ENCODE measurements at regions of chr16 and their contacts with region 1.

Region 1: DNA sequence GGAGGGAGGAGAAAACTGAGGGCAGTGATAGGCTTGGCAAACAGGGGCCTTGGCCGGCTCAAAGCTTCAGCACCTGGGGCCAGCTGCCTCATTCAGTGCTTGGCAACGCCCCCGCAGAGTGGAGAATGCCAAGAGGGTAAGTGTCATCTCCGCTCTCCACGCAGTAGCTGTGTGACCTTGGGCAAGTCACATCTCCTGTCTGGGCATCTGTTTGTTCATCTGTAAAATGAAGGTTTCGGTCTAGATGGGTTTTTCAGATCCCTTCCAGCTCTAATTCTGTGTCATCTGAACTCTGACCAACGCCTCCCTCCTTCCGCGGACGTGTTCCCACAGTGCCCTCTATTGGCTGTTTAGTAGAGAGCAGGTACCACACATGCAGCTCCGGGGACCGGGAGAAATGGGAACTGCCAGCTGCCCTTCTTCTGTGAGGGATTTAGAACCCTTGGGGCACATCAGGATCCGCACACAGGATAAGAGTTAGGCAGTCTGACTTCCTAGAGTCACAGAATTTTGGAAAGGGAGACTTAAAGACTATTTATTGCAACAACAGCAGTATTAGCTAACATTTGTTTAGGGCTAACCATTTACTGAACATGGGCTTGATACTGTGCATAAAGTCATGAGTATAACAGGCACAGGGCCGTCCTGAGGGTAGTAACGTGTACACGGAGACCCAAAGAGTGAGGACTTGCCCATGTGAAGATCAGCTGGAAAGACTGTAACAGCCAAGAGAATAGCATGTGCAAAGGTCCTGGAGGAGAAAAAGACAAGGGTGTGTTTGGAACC is 26.8 kb downstream of the GP2 start:
- DNase-seq: peak; percentile 71

Region 2: DNA sequence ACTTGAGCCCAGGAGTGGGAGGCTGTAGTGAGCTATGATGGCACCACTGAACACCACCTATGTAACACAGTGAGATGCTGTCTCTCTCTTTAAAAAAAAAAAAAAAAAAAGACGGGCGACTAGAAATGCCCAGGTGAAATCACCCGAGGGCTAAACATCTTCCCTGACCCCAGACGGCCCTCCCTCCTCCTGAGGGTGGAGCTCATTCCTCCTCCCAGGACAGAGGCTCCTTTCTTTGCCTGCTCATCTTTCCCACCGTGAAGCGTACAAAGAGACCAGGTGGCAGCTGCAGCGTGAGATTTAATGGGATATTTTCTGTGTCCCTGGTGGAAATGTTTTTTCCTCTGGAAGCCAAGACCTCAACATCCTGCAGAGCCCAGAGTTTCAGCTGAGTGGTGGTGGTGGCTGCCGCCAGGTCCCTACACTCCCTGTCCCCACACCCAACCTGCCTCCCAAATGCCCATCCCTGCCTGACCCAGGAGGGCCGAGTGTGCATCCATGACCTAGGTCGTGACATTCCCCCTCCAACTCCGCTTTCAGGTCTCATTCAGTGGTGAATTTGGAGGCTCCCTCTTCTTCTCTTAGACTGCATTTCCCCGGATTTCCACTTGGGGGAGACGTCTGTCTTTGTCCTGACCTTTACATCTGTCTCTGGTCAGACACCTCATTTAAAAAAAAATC is 401.4 kb before region 1 on chr16:
- CTCF ChIA-PET with region 1: interaction called, 11 read pairs
- POLR2A ChIA-PET with region 1: no interaction called
- DNase-seq: peak; percentile 55

Region 3: GRCh38 chr16:19907161-19907992 is 393.1 kb before region 1 on chr16:
- CTCF ChIA-PET with region 1: interaction called, 48 read pairs
- POLR2A ChIA-PET with region 1: interaction called, 3 read pairs
- DNase-seq: peak; percentile 79

Region 4: GRCh38 chr16:20192801-20193200 is 107.7 kb before region 1 on chr16:
- CTCF ChIA-PET with region 1: interaction called, 10 read pairs
- POLR2A ChIA-PET with region 1: no interaction called
- DNase-seq: no peak